CD4-positive, alpha-beta memory T cell (primary cell): ENCODE measurements at regions of chr3 and their contacts with region 1.

Region 1: DNA sequence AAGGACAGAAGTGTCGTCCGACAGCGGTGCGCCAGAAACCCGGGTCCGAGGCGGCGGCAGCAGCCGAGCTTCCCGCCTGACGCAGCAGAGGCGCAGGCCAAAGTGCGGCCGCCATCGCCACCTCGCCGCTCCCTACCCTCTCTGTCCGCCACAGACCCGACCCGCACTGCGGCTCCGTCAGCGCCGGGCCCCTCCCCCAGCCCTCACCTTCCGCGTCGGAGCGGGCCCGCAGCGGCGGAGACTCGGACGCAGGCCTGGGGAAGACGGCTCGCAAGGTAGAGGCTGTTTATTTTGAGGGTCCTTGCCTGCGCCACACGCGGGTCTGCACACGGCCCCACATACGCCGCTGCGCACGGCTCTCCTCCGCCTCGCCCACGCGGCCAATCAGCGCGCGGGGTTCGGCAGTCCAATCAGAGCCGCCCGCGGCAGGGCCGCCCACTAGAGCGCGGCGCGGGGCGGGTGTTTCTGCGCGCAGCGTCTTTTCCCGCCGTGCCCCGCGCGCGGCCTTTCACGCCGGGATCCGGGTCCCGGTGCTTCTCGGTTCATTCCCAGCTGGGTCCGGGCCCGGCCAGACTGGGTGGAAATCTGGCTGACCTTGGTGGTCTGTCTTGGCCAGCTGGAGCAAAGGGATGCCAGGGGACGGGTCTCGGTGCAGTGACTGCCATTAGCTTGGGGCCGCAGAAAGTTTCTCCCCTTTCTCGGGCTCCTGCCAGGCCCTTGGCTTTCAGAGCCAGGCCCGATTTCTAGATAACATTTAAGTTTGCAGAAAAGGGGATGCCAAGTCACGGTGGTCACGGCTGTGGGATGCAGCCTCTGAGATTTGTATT is at the start of gene CNBP:
- DNase-seq: peak; percentile 90 to 95 (median 93)
- H3K4me3 ChIP-seq: peak within 1 kb of the TSS; percentile 51 to 93
- H3K4me3 Mint-ChIP-seq: peak within 1 kb of the TSS; percentile 89 to 99 (median 97)
- H3K27ac ChIP-seq: peak within 1 kb of the TSS; percentile 99
- H3K27ac Mint-ChIP-seq: peak within 1 kb of the TSS; percentile 91 to 99 (median 98)
- H3K4me1 ChIP-seq: peaks cover 41% of the 10 kb centered on the region
- H3K4me1 Mint-ChIP-seq: peaks cover 20 to 55% (median 31%) of the 10 kb centered on the region in 4 donors
- H3K27me3 ChIP-seq: no peaks in the 10 kb centered on the region
- H3K27me3 Mint-ChIP-seq: no peaks in the 10 kb centered on the region
- total RNA-seq, gene CNBP: 369 to 400 TPM

Region 2: GRCh38 chr3:129278439-129278970 is 94.7 kb after region 1 on chr3 and contains the start of gene HMCES:
- CTCF ChIA-PET with region 1: no interaction called
- POLR2A ChIA-PET with region 1: interaction called, 8 read pairs
- intact Hi-C with region 1: loop called (anchors 1 kb)
- DNase-seq: peak; percentile 93 to 97 (median 95)
- H3K4me3 ChIP-seq: peak within 1 kb of the TSS; percentile 69 to 85
- H3K4me3 Mint-ChIP-seq: peak within 1 kb of the TSS; percentile 94 to 99 (median 98)
- H3K27ac ChIP-seq: peak within 1 kb of the TSS; percentile 99
- H3K27ac Mint-ChIP-seq: peak within 1 kb of the TSS; percentile 90 to 100 (median 99)
- H3K4me1 ChIP-seq: peaks cover 44% of the 10 kb centered on the region
- H3K4me1 Mint-ChIP-seq: peaks cover 22 to 50% (median 38%) of the 10 kb centered on the region in 4 donors
- H3K27me3 ChIP-seq: no peaks in the 10 kb centered on the region
- H3K27me3 Mint-ChIP-seq: no peaks in the 10 kb centered on the region
- total RNA-seq, gene HMCES: 50.1 to 52.5 TPM